CD8-positive, alpha-beta memory T cell (primary cell): ENCODE measurements at regions of chr13 and their contacts with region 1.

Region 1: DNA sequence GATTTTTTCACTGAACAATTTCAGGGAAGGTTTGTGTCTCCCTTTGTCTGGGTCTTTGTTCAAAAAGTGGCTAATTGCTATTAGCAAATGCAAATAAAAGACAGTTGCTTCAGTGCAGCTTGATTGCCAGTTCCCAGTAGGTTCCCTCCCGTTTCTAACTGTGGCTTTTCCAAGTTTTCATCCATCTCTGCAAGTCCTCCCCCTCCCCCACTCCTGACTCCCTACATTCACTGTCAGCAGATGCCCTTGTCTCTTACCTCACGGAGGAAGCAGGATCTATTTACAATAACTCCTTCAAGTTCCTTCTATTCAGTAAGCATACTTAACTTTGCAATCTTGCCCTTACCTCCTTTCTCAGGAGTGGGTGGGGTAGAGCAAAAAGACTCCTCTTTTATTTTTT is 55.4 kb upstream of the SCEL start:
- DNase-seq: no peak
- H3K4me3 ChIP-seq: no peak overlapping the region
- H3K4me3 Mint-ChIP-seq: no peak overlapping the region
- H3K27ac ChIP-seq: no peak overlapping the region
- H3K27ac Mint-ChIP-seq: peak overlapping the region in 1 of 8 donors; percentile 61
- H3K4me1 ChIP-seq: no peaks in the 10 kb centered on the region
- H3K4me1 Mint-ChIP-seq: peaks cover 8 to 16% (median 9%) of the 10 kb centered on the region in 3 donors
- H3K27me3 ChIP-seq: no peaks in the 10 kb centered on the region
- H3K27me3 Mint-ChIP-seq: no peaks in the 10 kb centered on the region

Region 2: GRCh38 chr13:77274126-77274525 is 205.9 kb before region 1 on chr13:
- CTCF ChIA-PET with region 1: interaction called, 11 read pairs
- POLR2A ChIA-PET with region 1: no interaction called
- DNase-seq: no peak
- H3K4me3 ChIP-seq: no peak overlapping the region
- H3K4me3 Mint-ChIP-seq: no peak overlapping the region
- H3K27ac ChIP-seq: no peak overlapping the region
- H3K27ac Mint-ChIP-seq: peak overlapping the region in 3 of 8 donors; percentile 1 to 43 (median 24)
- H3K4me1 ChIP-seq: no peaks in the 10 kb centered on the region
- H3K4me1 Mint-ChIP-seq: peaks cover 18 to 36% (median 33%) of the 10 kb centered on the region in 3 donors
- H3K27me3 ChIP-seq: no peaks in the 10 kb centered on the region
- H3K27me3 Mint-ChIP-seq: no peaks in the 10 kb centered on the region

Region 3: DNA sequence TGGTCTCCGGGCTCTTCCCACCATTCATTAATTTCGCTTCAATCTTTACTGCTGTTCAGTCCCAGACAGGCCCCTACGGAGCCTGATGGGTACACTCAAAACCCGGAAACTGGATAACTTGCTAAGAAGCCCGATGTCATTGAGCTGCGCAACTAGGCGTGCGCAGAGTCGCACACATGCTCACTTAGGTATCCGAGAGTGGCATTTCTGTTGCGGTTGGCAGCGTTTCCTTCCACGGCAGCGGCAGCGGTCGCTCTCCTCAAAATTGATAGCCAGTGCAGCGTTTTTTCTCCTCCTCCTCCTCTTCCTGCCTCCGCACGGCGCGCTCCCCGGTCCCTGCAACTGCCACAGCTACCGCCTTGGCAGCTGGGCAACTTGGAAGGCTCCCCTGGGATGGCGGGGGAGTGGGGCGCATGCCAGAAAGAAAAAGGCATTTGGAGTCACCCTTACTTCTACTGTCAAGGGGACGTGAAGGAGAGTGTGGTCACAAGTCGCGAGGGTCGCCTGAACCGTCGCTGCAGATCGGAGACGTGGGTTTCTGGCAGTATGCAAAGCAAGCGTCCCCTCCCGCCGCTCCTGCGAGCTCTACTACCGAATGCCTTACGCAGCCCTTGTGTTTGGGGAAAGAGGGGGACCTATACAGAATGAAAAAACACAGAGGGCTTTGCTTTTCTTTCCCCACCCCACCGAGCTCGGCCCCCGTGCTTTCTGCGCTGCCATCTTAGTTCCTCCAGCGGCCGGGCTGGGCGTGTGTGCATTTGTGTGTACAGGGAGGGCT is 150.7 kb before region 1 on chr13:
- CTCF ChIA-PET with region 1: interaction called, 30 read pairs
- POLR2A ChIA-PET with region 1: interaction called, 15 read pairs
- DNase-seq: peak; percentile 81 to 95 (median 92)
- H3K4me3 ChIP-seq: peak overlapping the region; percentile 74
- H3K4me3 Mint-ChIP-seq: peak overlapping the region; percentile 88 to 99 (median 94)
- H3K27ac ChIP-seq: peak overlapping the region; percentile 69
- H3K27ac Mint-ChIP-seq: peak overlapping the region; percentile 92 to 99 (median 95)
- H3K4me1 ChIP-seq: peaks cover 32% of the 10 kb centered on the region
- H3K4me1 Mint-ChIP-seq: peaks cover 46 to 57% (median 51%) of the 10 kb centered on the region in 3 donors
- H3K27me3 ChIP-seq: no peaks in the 10 kb centered on the region
- H3K27me3 Mint-ChIP-seq: peaks cover 0 to 3% of the 10 kb centered on the region in 2 donors

Region 4: GRCh38 chr13:77492982-77493381 is 12.9 kb after region 1 on chr13:
- CTCF ChIA-PET with region 1: interaction called, 10 read pairs
- POLR2A ChIA-PET with region 1: no interaction called
- DNase-seq: no peak
- H3K4me3 ChIP-seq: no peak overlapping the region
- H3K4me3 Mint-ChIP-seq: no peak overlapping the region
- H3K27ac ChIP-seq: no peak overlapping the region
- H3K27ac Mint-ChIP-seq: no peak overlapping the region
- H3K4me1 ChIP-seq: no peaks in the 10 kb centered on the region
- H3K4me1 Mint-ChIP-seq: no peaks in the 10 kb centered on the region
- H3K27me3 ChIP-seq: no peaks in the 10 kb centered on the region
- H3K27me3 Mint-ChIP-seq: peaks cover 2 to 13% of the 10 kb centered on the region in 2 donors